MCF 10A (cell line): ENCODE measurements at regions of chr6 and their contacts with region 1.

Region 1: DNA sequence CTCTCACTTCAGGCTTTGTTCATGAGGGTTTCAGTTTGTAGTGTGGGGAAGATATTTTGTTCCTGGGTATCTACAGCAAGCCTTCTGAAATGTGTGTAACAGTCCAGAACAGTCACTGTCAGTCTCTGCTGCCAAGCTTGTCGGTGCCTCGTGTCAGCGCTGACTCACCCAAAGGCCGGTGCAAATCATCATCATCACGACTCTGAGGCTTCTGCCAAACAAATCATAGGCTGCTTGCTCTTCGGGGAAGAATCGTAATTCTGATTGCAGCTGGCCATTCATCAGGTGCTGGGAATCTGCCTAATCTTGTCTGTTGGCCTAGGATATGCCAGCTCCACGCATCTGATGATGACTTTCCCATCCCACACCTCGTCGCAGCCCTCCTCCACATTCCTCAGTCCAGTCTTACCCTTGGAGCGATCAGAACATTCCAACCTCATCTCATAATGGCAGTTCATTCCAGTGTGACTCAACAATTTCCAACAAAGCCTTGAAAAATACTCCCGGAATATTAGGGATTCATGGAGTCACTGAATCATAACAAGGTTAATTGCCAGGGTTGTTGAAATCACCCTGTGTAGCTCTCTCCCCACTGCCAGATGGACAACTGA is 40.9 kb downstream of the ALDH8A1 start:
- DNase-seq: peak; percentile 98
- H3K4me3 Mint-ChIP-seq: peak overlapping the region; percentile 28
- H3K27ac Mint-ChIP-seq: peak overlapping the region; percentile 81
- H3K4me1 Mint-ChIP-seq: peaks cover 31% of the 10 kb centered on the region
- H3K27me3 Mint-ChIP-seq: no peaks in the 10 kb centered on the region
- CTCF ChIP-seq: no peak

Region 2: DNA sequence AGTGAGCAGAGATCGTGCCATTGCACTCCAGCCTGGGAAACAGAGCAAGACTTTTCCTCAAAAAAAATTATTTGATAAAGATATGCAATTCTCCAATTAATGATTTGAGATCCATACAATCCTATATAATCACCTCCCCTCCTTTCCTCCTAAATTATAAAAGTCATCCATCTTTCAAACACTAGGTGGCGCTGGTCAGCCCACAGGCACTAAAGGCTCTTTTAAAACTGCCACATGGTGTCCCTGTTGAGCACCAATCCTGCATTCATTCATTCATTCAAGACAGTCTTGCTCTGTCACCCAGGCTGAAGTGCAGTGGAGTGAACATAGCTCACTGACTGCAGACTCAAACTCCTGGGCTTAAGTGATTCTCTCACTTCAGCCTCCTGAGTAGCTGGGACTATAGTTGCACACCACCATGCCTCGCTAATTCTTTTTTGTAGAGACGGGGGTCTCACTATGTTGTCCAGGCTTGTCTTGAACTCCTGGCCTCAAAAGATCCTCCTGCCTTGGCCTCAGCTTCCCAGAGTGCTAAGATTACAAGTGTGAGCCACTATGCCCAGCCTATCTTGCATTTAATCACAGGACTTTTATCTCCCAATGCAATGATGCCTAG is 797.8 kb before region 1 on chr6:
- CTCF ChIA-PET with region 1: no interaction called
- POLR2A ChIA-PET with region 1: interaction called, 11 read pairs
- intact Hi-C with region 1: no loop called
- DNase-seq: peak; percentile 67
- H3K4me3 Mint-ChIP-seq: no peak overlapping the region
- H3K27ac Mint-ChIP-seq: no peak overlapping the region
- H3K4me1 Mint-ChIP-seq: peaks cover 19% of the 10 kb centered on the region
- H3K27me3 Mint-ChIP-seq: no peaks in the 10 kb centered on the region
- CTCF ChIP-seq: peak; percentile 76

Region 3: DNA sequence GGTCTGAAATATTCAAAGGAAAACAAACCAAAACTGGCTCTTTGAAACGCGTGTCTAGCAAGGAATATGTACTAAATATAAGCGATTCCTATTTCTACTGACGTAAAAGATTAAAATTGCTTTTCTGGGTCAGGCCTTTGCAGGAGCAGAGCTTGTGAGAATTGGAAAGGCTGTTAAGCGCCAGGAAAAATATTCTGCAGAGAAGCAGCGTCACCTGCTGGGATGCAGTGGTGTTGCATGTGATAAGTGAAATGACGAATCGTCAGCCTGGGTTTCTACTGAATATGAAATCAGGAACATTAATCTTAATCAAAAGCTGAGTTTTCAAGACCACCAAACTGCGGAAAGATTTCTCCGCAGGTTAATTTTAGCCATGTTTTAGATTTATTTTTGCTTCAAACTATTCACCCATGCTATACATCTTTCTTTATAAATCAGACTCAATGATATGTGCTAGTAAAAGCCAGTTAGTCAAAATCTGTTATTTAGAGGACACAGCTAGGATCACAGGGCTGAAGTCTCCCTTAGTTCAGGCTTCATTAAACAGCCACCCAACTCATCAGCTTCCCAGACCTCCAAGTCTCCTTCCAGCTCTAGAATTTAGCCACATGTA is 26.5 kb before region 1 on chr6:
- CTCF ChIA-PET with region 1: interaction called, 10 read pairs
- POLR2A ChIA-PET with region 1: interaction called, 11 read pairs
- intact Hi-C with region 1: no loop called
- DNase-seq: peak; percentile 82
- H3K4me3 Mint-ChIP-seq: no peak overlapping the region
- H3K27ac Mint-ChIP-seq: no peak overlapping the region
- H3K4me1 Mint-ChIP-seq: peaks cover 16% of the 10 kb centered on the region
- H3K27me3 Mint-ChIP-seq: no peaks in the 10 kb centered on the region
- CTCF ChIP-seq: peak; percentile 94

Region 4: GRCh38 chr6:134925800-134926199 is 16.8 kb after region 1 on chr6:
- CTCF ChIA-PET with region 1: interaction called, 4 read pairs
- POLR2A ChIA-PET with region 1: interaction called, 13 read pairs
- intact Hi-C with region 1: no loop called
- DNase-seq: peak; percentile 62
- H3K4me3 Mint-ChIP-seq: no peak overlapping the region
- H3K27ac Mint-ChIP-seq: peak overlapping the region; percentile 8
- H3K4me1 Mint-ChIP-seq: peaks cover 6% of the 10 kb centered on the region
- H3K27me3 Mint-ChIP-seq: no peaks in the 10 kb centered on the region
- CTCF ChIP-seq: no peak